ENCODE measurements at regions of chr13 and their contacts with region 1.

Region 1: DNA sequence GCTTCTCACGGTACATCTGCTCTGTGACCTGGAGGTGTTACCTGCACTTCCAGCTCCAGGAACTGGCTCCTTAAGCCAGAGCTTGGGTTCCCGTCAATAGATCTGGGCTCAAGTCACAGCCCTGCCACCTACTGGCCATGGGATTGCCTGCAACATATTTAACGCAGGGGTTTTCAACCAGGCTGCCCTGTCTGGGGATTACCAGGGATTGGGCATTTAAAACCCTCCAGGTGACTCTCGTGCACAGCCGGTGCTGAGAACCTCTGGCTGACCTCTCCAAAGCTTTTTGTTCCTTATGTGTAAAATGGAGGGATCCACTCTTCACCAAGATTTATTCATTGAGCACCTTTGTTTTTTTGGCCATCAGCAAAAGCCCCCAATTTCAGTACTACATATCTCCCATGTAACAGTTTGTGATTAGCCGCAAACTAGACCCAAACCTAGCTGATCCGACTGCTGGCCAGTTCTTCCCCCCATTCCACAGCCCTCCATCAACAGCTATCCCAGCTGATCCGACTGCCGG is 76.6 kb upstream of the STK24 start:
- DNase-seq: peak; percentile 81

Region 2: DNA sequence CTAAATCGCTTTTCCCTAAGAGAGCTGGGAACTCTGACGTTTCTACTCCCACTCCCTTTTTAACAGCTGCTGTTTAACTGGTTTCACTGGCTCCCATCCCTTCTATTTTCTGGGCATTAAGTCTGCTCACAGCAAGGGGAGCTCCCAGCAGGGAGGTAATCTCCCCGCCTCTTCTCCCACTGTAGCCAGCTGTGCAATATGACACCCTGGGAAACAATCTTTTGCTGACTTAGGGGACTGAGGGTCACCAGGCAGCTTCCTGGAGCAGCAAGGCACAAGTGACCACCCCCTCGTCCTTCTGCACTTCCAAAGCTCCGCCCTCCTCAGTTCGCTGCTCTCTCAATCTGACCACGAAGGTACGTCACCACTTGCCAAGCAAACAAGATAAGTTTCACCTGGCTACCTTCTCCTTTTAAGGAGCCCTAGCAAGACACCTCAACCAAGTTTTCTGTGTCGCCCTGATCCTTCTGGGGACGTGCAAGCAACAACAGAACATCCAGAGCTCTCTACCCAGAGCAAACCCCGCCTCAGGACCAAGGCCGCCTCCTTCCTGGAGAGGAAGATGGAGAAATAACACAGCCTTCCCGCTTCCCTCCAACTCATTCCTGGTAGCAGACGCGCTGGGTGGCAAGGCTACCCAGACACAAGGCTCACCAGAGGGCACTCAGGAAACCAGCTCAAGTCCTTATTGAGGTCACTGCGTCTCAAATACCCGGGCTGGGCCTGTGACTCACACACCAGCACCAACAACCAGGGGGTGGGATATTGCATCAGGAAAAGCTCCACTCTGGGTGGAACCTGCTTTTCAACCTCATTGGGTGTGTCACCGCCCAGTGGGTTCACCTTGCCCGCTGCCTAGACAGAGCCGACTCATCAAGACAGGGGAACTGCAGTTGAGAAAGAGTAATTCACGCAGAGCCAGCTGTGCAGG is 169.0 kb before region 1 on chr13:
- CTCF ChIA-PET with region 1: interaction called, 15 read pairs
- POLR2A ChIA-PET with region 1: no interaction called
- DNase-seq: peak; percentile 45

Region 3: GRCh38 chr13:98672944-98673545 is 19.5 kb after region 1 on chr13:
- CTCF ChIA-PET with region 1: interaction called, 11 read pairs
- POLR2A ChIA-PET with region 1: no interaction called
- DNase-seq: peak; percentile 74

Measured in HEK293T (cell line).